GM10248 (cell line): ENCODE measurements at regions of chr10 and their contacts with region 1.

Region 1: GRCh38 chr10:91006001-91006751 is 85.3 kb upstream of the ANKRD1 start:
- DNase-seq: peak; percentile 28
- CTCF ChIP-seq: peak; percentile 67

Region 2: GRCh38 chr10:90912174-90912573 is 94.0 kb before region 1 on chr10:
- CTCF ChIA-PET with region 1: interaction called, 23 read pairs
- POLR2A ChIA-PET with region 1: no interaction called
- DNase-seq: no peak
- CTCF ChIP-seq: no peak

Region 3: DNA sequence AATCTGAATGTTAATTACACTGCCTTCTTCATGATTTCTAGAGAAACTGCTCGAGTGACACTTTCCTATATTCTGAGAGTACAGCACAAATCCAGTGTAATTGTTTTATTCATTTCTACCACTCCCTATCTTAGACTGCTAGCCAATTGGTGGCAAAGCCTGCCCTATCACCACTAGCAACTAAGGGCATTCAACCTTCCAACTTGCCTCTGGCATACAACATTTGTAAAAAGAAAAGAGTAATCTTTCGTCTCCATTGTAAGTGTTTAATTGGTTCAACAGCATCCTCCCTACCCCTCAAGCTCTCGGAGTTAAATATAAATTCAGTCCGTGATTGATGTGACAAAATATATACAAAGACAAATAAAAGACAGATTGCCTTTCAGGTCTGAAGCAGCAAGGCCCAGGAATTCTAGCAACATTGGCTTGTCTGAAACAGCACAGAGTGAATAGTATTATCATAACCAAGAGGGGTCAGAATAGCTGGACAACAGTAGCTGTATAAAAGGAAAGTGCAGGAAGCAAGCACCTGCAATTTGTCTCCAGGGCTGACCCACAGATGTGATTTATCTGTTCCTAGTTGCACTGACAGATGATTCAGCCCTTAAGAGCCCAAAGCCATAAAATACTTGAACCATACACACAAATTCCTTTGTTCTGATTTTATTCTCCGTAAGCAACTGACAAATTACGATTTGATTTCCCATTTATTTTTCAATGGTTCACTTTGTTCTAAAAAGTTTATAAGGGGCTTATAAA is 37.7 kb before region 1 on chr10:
- CTCF ChIA-PET with region 1: interaction called, 10 read pairs
- POLR2A ChIA-PET with region 1: no interaction called
- DNase-seq: no peak
- CTCF ChIP-seq: no peak

Region 4: GRCh38 chr10:90993340-90993739 is 12.8 kb before region 1 on chr10:
- CTCF ChIA-PET with region 1: interaction called, 13 read pairs
- POLR2A ChIA-PET with region 1: interaction called, 3 read pairs
- DNase-seq: no peak
- CTCF ChIP-seq: no peak

Region 5: GRCh38 chr10:91034494-91035159 is 28.5 kb after region 1 on chr10:
- CTCF ChIA-PET with region 1: interaction called, 11 read pairs
- POLR2A ChIA-PET with region 1: no interaction called
- DNase-seq: no peak
- CTCF ChIP-seq: no peak

Region 6: DNA sequence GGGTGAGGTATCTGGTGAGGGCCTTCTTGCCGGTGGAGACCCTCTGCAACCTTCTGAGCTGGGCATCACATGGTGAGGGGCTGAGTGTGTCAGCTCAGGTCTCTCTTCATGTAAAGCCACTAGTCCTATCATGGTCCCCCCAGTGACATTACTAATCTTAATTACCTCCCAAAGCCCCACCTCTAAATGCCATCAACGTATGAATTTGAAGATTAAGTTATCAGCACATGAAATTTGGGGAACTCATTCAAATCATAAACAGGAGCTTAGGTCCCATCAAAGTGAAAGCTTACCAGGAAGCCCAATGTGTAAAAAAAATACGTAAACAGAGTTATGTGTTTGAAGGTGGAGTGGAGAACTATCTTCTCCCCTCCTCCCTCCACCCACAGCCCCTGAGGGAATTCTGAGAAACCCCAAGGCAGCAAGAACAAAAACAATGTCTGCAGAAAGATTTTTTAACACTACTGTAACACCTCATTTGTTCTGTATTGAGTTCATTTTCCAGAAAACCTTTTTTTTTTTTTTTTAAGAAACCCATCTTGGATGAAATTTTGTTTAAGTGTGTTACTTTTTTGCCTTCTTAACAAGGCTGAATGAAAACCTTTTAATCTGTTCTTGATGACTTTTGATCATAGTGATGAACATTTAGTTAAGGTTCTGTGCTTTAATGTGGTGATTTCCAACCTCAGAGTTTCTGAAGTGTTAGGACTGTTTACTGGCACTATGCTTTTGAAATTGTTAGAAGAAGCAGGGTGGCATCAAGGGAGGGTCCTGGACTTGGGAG is 195.2 kb after region 1 on chr10:
- CTCF ChIA-PET with region 1: interaction called, 12 read pairs
- POLR2A ChIA-PET with region 1: no interaction called
- DNase-seq: no peak
- CTCF ChIP-seq: no peak

Region 7: GRCh38 chr10:91340613-91341362 is 334.6 kb after region 1 on chr10:
- CTCF ChIA-PET with region 1: no interaction called
- POLR2A ChIA-PET with region 1: no interaction called
- DNase-seq: no peak
- CTCF ChIP-seq: no peak